CD4-positive, alpha-beta T cell (primary cell): ENCODE measurements at regions of chr12 and their contacts with region 1.

Region 1: GRCh38 chr12:14995583-14996425 is 23.0 kb downstream of the PDE6H start:
- DNase-seq: peak in 3 of 14 experiments; percentile 72 to 83 (median 83)
- ATAC-seq: peak; percentile 72
- H3K4me3 ChIP-seq: no peak overlapping the region
- H3K4me3 Mint-ChIP-seq: peak overlapping the region; percentile 60
- H3K27ac ChIP-seq: no peak overlapping the region
- H3K27ac Mint-ChIP-seq: peak overlapping the region; percentile 82
- H3K4me1 ChIP-seq: peaks cover 24% of the 10 kb centered on the region
- H3K4me1 Mint-ChIP-seq: peaks cover 36% of the 10 kb centered on the region
- H3K27me3 ChIP-seq: no peaks in the 10 kb centered on the region
- H3K27me3 Mint-ChIP-seq: no peaks in the 10 kb centered on the region
- CTCF ChIP-seq: peak; percentile 76

Region 2: DNA sequence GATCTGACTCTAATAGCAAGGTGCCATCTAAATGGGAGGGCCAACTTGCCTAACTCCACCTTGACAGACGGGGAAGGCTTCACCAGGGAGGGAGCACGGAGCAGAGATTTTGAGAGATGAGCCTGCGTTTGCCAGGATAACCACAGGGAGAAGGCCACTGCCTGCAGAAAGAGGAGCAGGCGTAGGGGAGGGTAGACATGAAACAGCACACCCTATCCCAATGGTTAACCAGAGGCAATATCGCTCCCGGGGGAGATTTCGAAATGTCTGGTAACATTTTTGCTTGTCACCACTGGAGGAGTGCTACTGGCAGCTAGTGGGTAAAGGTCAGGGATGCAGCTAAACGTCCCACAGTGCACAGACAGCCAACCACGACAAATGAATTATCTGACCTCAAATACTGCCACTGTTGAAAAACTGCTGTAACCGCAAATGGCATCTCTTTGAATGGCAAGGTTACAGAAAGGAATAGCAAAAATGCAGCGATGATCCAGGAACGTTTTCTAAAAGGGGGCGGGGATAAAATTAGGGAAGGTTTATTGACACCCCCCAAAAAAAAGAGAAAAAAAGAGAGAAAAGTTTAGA is 756.4 kb before region 1 on chr12:
- CTCF ChIA-PET with region 1: no interaction called
- POLR2A ChIA-PET with region 1: no interaction called
- intact Hi-C with region 1: loop called (anchors 2 to 10 kb)
- DNase-seq: peak in 5 of 14 experiments; percentile 8 to 66 (median 54)
- ATAC-seq: peak; percentile 62
- H3K4me3 ChIP-seq: peak overlapping the region; percentile 49
- H3K4me3 Mint-ChIP-seq: peak overlapping the region; percentile 88
- H3K27ac ChIP-seq: peak overlapping the region in 1 of 2 donors; percentile 18
- H3K27ac Mint-ChIP-seq: peak overlapping the region; percentile 87
- H3K4me1 ChIP-seq: peaks cover 19% of the 10 kb centered on the region
- H3K4me1 Mint-ChIP-seq: peaks cover 20% of the 10 kb centered on the region
- H3K27me3 ChIP-seq: no peaks in the 10 kb centered on the region
- H3K27me3 Mint-ChIP-seq: no peaks in the 10 kb centered on the region
- CTCF ChIP-seq: no peak

Region 3: GRCh38 chr12:14723763-14724162 is 272.0 kb before region 1 on chr12:
- CTCF ChIA-PET with region 1: interaction called, 16 read pairs
- POLR2A ChIA-PET with region 1: no interaction called
- intact Hi-C with region 1: loop called (anchors 1 to 2 kb)
- DNase-seq: peak; percentile 21 to 80 (median 46)
- ATAC-seq: peak; percentile 76
- H3K4me3 ChIP-seq: no peak overlapping the region
- H3K4me3 Mint-ChIP-seq: no peak overlapping the region
- H3K27ac ChIP-seq: no peak overlapping the region
- H3K27ac Mint-ChIP-seq: no peak overlapping the region
- H3K4me1 ChIP-seq: no peaks in the 10 kb centered on the region
- H3K4me1 Mint-ChIP-seq: peaks cover 5% of the 10 kb centered on the region
- H3K27me3 ChIP-seq: no peaks in the 10 kb centered on the region
- H3K27me3 Mint-ChIP-seq: peaks cover 11% of the 10 kb centered on the region
- CTCF ChIP-seq: peak; percentile 81

Region 4: GRCh38 chr12:14845350-14845750 is 150.5 kb before region 1 on chr12:
- CTCF ChIA-PET with region 1: interaction called, 31 read pairs
- POLR2A ChIA-PET with region 1: interaction called, 6 read pairs
- intact Hi-C with region 1: loop called (anchors 1 kb)
- DNase-seq: peak in 12 of 14 experiments; percentile 8 to 74 (median 34)
- ATAC-seq: peak; percentile 68
- H3K4me3 ChIP-seq: no peak overlapping the region
- H3K4me3 Mint-ChIP-seq: no peak overlapping the region
- H3K27ac ChIP-seq: no peak overlapping the region
- H3K27ac Mint-ChIP-seq: no peak overlapping the region
- H3K4me1 ChIP-seq: peaks cover 3% of the 10 kb centered on the region
- H3K4me1 Mint-ChIP-seq: peaks cover 9% of the 10 kb centered on the region
- H3K27me3 ChIP-seq: no peaks in the 10 kb centered on the region
- H3K27me3 Mint-ChIP-seq: no peaks in the 10 kb centered on the region
- CTCF ChIP-seq: peak; percentile 79

Region 5: GRCh38 chr12:14948672-14949071 is 47.1 kb before region 1 on chr12:
- CTCF ChIA-PET with region 1: interaction called, 5 read pairs
- POLR2A ChIA-PET with region 1: interaction called, 12 read pairs
- intact Hi-C with region 1: no loop called
- DNase-seq: peak in 9 of 14 experiments; percentile 29 to 92 (median 57)
- ATAC-seq: peak; percentile 85
- H3K4me3 ChIP-seq: peak overlapping the region; percentile 34
- H3K4me3 Mint-ChIP-seq: peak overlapping the region; percentile 81
- H3K27ac ChIP-seq: peak overlapping the region; percentile 90 to 95
- H3K27ac Mint-ChIP-seq: peak overlapping the region; percentile 94
- H3K4me1 ChIP-seq: peaks cover 66% of the 10 kb centered on the region
- H3K4me1 Mint-ChIP-seq: peaks cover 92% of the 10 kb centered on the region
- H3K27me3 ChIP-seq: no peaks in the 10 kb centered on the region
- H3K27me3 Mint-ChIP-seq: no peaks in the 10 kb centered on the region
- CTCF ChIP-seq: no peak

Region 6: DNA sequence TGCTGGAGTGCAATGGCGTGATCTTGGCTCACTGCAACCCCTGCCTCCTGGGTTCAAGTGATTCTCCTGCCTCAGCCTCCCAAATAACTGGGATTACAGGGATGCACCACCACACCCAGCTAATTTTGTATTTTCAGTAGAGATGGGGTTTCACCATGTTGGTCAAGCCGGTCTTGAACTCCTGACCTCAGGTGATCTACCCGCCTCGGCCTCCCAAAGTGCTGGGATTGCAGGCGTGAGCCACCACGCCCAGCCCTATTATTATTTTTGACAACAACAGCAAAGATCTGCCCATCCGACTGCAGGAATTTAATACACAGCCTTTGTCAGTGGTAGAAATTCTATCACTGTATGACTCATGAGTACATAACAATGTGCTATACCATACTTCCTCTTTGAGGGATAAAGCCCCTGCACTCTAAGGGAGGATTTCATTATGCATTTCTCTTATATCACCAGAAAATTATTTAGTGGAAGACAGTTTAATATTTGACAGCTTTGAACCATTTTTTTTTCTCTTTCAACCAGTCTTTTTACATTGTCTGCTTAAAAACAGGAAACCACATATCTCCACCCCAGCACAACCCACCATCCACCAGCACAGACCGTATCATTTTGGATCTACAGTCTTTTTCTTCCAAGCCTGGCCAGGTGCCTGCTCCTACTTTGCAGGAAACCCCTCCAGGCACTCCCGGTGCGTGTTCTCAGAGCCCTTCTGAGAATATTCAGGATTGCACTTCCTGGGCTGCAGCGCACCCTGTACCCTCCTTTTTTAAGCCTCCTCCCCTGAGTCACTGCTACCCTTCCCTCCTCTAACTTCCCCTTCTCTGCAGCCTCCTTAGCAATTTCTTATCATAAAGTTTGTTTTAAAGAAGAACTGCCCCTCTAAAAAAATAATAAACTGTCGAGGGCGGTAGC is 35.0 kb before region 1 on chr12:
- CTCF ChIA-PET with region 1: interaction called, 15 read pairs
- POLR2A ChIA-PET with region 1: interaction called, 74 read pairs
- intact Hi-C with region 1: loop called (anchors 1 to 2 kb)
- DNase-seq: peak in 12 of 14 experiments; percentile 45 to 79 (median 55)
- ATAC-seq: peak; percentile 40
- H3K4me3 ChIP-seq: peak overlapping the region; percentile 80
- H3K4me3 Mint-ChIP-seq: peak overlapping the region; percentile 97
- H3K27ac ChIP-seq: peak overlapping the region; percentile 89 to 90
- H3K27ac Mint-ChIP-seq: peak overlapping the region; percentile 94
- H3K4me1 ChIP-seq: peaks cover 41% of the 10 kb centered on the region
- H3K4me1 Mint-ChIP-seq: peaks cover 73% of the 10 kb centered on the region
- H3K27me3 ChIP-seq: no peaks in the 10 kb centered on the region
- H3K27me3 Mint-ChIP-seq: no peaks in the 10 kb centered on the region
- CTCF ChIP-seq: no peak

Region 7: GRCh38 chr12:15268927-15269552 is 273.2 kb after region 1 on chr12:
- CTCF ChIA-PET with region 1: no interaction called
- POLR2A ChIA-PET with region 1: no interaction called
- intact Hi-C with region 1: loop called in 1 of 2 experiments (anchors 5 kb)
- DNase-seq: peak in 11 of 14 experiments; percentile 3 to 74 (median 15)
- ATAC-seq: peak; percentile 77
- H3K4me3 ChIP-seq: no peak overlapping the region
- H3K4me3 Mint-ChIP-seq: no peak overlapping the region
- H3K27ac ChIP-seq: no peak overlapping the region
- H3K27ac Mint-ChIP-seq: no peak overlapping the region
- H3K4me1 ChIP-seq: no peaks in the 10 kb centered on the region
- H3K4me1 Mint-ChIP-seq: no peaks in the 10 kb centered on the region
- H3K27me3 ChIP-seq: peaks cover 2 to 5% of the 10 kb centered on the region in 2 experiments
- H3K27me3 Mint-ChIP-seq: peaks cover 9% of the 10 kb centered on the region
- CTCF ChIP-seq: peak; percentile 88

Region 8: DNA sequence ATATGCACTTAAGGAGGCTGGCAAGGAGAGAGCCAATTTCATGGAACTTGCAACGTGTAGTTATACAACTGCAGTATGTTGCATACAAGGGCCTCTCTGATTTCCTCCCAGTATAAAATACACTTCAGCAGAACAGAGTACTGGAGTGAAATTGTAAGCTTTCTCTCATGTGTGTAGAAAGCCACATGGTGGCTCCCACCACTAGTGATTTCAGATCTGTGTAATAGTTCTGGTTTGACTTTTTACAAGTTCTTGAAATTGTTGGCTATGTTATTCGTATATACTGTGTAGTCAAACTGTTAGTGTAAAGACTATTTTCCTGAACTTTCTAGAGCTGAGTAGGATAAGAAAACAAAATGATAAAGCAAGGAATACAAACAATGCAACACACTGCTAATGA is 1626.5 kb after region 1 on chr12:
- CTCF ChIA-PET with region 1: no interaction called
- POLR2A ChIA-PET with region 1: no interaction called
- intact Hi-C with region 1: no loop called
- DNase-seq: no peak
- ATAC-seq: no peak
- H3K4me3 ChIP-seq: no peak overlapping the region
- H3K4me3 Mint-ChIP-seq: no peak overlapping the region
- H3K27ac ChIP-seq: no peak overlapping the region
- H3K27ac Mint-ChIP-seq: no peak overlapping the region
- H3K4me1 ChIP-seq: no peaks in the 10 kb centered on the region
- H3K4me1 Mint-ChIP-seq: no peaks in the 10 kb centered on the region
- H3K27me3 ChIP-seq: no peaks in the 10 kb centered on the region
- H3K27me3 Mint-ChIP-seq: no peaks in the 10 kb centered on the region
- CTCF ChIP-seq: no peak